ENCODE measurements at regions of chr1 and their contacts with region 1.

Region 1: GRCh38 chr1:204207136-204207616 is 6.6 kb downstream of the GOLT1A start:
- DNase-seq: peak; percentile 85

Region 2: GRCh38 chr1:203861379-203862184 is 345.6 kb before region 1 on chr1 and contains the start of gene SNRPE:
- intact Hi-C with region 1: loop called (anchors 2 kb)
- DNase-seq: peak; percentile 98
- total RNA-seq, gene SNRPE: 47.8 TPM

Region 3: DNA sequence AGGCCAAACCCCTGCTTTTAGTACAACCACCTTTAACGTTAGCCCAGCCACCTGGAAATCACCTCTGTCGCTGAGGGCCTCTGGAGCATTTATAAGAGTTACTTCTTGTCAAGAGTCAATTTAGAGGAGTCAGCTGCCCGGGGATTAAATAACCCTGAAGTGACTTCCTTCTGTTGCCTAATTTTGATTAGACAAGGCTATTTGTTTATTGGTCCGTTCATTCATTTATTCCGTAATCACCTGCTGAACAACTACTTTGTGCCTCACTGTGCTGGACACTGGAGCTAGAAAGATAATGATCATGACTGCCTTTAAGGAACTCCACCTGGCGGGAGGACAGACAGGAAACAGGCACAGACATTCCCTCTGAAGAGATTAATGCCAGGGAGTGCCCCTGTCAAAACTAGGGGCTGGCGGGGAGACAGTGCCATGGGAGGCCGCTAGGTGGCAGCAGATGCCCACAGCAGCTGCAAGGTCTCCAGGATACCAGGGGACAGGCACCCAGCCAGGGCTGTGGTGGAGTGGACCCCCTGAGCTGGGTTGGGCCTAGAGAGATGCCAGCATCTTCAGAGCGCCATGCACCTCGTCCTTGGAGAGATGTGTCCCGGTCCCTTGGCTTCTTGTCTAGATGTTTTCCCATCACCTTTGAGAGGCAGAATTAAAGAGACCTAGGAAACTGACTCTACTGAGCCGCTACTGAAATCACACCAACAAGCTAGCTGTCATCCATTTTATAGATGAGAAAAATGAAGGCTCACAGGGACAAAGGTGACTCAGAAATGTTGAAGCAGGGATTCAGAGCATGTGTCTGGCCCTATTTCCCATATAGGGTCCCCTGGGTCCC is 44.7 kb before region 1 on chr1:
- intact Hi-C with region 1: loop called (anchors 1 kb)
- DNase-seq: peak; percentile 85

Measured in cardiac septum (tissue), 1 donor.